Natural killer cell (primary cell): ENCODE measurements at regions of chr2 and their contacts with region 1.

Region 1: DNA sequence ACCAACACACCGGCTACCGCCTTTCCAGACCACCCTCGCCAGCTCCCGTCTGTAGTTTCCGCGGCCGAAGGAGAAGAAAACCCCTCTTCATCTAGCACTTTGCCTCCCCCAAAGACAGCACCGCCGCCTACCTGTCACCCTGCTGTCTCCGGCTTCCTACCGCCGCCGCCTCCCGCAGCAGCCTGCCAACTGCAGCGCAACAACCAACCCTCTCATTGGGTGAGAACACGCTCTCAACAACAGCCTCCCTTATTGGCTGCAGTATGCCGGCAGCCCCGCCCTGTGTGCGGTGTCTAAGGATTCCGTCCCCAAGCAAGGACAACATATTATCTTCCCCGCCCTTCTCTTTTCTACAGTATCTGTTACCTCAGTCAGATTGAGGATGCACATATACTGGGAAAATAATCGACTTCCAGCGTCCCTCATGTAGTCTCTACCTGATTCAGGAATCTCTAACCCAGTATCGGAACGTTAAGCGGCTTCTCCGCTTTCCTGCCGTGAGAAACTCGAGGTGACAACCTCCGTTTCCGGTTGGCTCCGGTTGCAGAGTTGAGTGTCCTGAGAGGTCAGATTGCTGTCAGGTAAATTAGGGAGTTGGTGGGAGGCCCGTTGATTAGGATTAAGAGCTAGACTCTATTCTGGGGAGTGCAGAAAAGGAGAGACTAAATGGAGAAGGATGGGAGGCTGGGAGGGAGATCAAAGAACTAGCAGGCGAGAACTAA is at the starts of genes HYCC2 and NDUFB3:
- DNase-seq: peak; percentile 90 to 98
- ATAC-seq: peak; percentile 92 to 99 (median 96)
- H3K4me3 ChIP-seq: peak within 1 kb of the TSS; percentile 72
- H3K4me3 Mint-ChIP-seq: peak within 1 kb of the TSS; percentile 97
- H3K27ac ChIP-seq: peak within 1 kb of the TSS; percentile 90
- H3K27ac Mint-ChIP-seq: peak within 1 kb of the TSS; percentile 93 to 100
- H3K4me1 ChIP-seq: peaks cover 12% of the 10 kb centered on the region
- H3K4me1 Mint-ChIP-seq: peaks cover 43 to 46% of the 10 kb centered on the region in 2 donors
- H3K27me3 ChIP-seq: no peaks in the 10 kb centered on the region
- H3K27me3 Mint-ChIP-seq: no peaks in the 10 kb centered on the region
- CTCF ChIP-seq: peak; percentile 30
- total RNA-seq, gene HYCC2: 54.2 to 62.5 (median 60.1) TPM
- total RNA-seq, gene NDUFB3: 23.5 to 32.7 (median 30.7) TPM

Region 2: DNA sequence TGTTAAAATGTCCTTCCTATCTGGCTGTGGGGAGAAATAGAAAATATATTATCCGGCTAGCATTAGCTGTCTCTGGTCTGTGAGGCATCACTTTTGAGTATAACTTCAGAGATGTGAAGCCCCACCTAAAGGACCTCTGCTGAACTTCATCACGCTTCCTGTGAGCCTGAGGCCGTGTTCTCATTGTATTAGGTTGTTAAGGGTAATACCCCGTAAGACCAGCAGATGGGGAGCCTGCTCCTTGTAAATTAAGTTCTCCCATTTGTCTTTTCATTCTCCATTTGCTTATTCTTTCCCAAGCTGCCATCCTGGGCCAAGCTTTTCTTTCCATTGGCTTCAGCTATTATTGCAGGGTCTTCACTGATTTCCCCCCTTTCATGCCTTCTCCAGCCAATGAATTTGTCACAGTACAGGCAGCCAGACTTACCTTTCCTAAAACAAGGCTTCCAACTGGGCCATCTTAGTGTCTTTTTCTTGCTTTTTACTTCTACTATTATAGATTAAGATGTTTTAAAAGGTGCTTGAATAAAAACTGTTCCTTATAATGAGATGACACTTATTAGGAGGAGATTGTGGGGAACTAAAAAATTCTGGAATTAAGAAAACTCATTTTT is 170.1 kb before region 1 on chr2:
- intact Hi-C with region 1: loop called (anchors 1 kb)
- DNase-seq: peak; percentile 55 to 91
- ATAC-seq: peak; percentile 100
- H3K4me3 ChIP-seq: no peak overlapping the region
- H3K4me3 Mint-ChIP-seq: no peak overlapping the region
- H3K27ac ChIP-seq: peak overlapping the region; percentile 34
- H3K27ac Mint-ChIP-seq: peak overlapping the region; percentile 63
- H3K4me1 ChIP-seq: no peaks in the 10 kb centered on the region
- H3K4me1 Mint-ChIP-seq: peaks cover 6 to 8% of the 10 kb centered on the region in 2 donors
- H3K27me3 ChIP-seq: no peaks in the 10 kb centered on the region
- H3K27me3 Mint-ChIP-seq: no peaks in the 10 kb centered on the region
- CTCF ChIP-seq: peak; percentile 87

Region 3: DNA sequence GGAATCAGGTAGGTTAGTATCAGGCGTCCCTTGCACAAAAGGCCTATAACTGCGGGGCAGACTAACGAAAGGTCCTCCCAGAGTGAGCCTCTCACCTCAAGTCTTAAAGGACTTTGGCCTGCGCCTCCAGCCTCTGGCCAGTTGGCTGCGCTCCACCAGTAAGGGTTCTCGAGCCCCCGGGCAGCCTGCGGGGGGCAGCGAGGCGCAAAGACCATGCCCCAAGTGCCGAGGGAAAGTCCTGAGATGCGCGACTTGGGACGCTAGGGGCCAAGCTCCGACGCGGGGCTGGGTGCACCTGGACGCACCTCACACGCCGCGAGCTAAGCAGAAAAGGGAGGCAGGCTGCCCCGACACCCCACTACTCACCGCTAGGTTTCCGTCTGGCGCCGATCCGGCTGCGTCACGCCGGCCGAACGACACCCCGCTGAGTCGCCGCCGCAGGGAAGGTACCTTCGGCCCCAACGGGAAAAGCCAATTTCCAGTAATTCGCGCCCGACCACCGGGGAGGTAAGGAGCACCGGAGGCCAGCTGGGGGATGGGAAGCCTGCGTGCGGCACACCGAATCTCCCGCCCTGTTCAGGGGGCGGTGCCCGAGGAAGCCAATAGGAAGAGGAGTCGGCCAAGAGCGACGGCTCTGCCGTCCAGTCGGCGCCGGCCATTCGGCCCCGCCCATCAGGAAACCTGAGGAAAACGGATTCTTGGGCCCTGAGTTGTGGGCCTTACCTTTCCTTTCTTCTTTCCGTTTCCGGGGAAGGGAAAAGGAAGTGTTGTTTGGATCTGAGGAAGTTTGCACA is 108.3 kb before region 1 on chr2 and contains the start of gene ORC2:
- intact Hi-C with region 1: loop called (anchors 2 kb)
- DNase-seq: peak; percentile 94 to 96
- ATAC-seq: peak; percentile 95 to 99 (median 96)
- H3K4me3 ChIP-seq: peak within 1 kb of the TSS; percentile 75
- H3K4me3 Mint-ChIP-seq: peak within 1 kb of the TSS; percentile 98
- H3K27ac ChIP-seq: peak within 1 kb of the TSS; percentile 86
- H3K27ac Mint-ChIP-seq: peak within 1 kb of the TSS; percentile 98
- H3K4me1 ChIP-seq: peaks cover 8% of the 10 kb centered on the region
- H3K4me1 Mint-ChIP-seq: peaks cover 34 to 47% of the 10 kb centered on the region in 2 donors
- H3K27me3 ChIP-seq: no peaks in the 10 kb centered on the region
- H3K27me3 Mint-ChIP-seq: no peaks in the 10 kb centered on the region
- CTCF ChIP-seq: peak; percentile 71
- total RNA-seq, gene ORC2: 21.7 to 48.5 (median 26.1) TPM

Region 4: GRCh38 chr2:201007561-201007998 is 64.1 kb before region 1 on chr2:
- intact Hi-C with region 1: no loop called
- DNase-seq: no peak
- ATAC-seq: no peak
- H3K4me3 ChIP-seq: no peak overlapping the region
- H3K4me3 Mint-ChIP-seq: no peak overlapping the region
- H3K27ac ChIP-seq: no peak overlapping the region
- H3K27ac Mint-ChIP-seq: no peak overlapping the region
- H3K4me1 ChIP-seq: no peaks in the 10 kb centered on the region
- H3K4me1 Mint-ChIP-seq: no peaks in the 10 kb centered on the region
- H3K27me3 ChIP-seq: no peaks in the 10 kb centered on the region
- H3K27me3 Mint-ChIP-seq: no peaks in the 10 kb centered on the region
- CTCF ChIP-seq: no peak

Region 5: DNA sequence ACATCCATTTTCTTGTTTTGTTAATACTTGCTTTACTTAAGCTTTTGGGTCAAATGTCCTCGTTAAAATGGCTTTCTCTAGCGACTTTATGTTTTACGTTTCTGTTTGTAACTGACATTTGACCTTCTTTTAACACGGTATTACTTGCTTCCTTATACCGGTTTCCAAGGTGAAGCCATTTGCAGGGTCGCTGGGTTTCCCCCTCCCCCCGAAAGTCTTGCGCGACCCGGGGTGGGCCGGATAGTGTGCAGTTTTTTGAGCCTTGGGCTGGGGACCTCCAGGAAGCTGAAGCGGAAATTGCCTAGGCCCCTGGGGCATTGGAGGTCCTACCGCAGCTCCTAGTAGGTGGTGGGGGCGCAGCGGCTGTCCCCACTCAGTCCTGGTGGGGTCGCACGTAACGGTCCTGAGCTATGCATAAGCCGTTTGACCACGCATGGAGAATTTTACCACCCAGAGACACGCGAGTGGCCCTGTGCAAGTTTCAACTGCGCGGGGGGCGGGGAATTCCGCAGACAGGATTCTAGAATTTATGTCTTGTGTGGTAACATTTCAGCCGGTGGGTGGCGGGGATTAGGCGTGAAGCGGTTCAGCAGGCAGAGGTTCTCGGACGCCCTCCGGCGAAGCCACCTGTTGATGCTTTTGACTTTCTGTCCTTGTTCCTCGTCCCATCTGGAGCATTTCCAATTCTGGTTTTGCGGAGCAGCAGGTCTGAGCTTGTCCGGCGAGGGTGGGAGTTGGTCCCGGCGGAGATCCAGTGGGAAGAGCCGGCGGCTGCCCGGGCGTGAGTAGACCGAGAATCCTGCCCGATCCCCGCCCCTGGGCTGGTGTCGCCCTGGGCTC is 46.7 kb after region 1 on chr2:
- intact Hi-C with region 1: loop called (anchors 1 kb)
- DNase-seq: peak; percentile 87 to 93
- ATAC-seq: peak; percentile 46 to 61 (median 54)
- H3K4me3 ChIP-seq: peak overlapping the region; percentile 90
- H3K4me3 Mint-ChIP-seq: peak overlapping the region; percentile 95
- H3K27ac ChIP-seq: peak overlapping the region; percentile 93
- H3K27ac Mint-ChIP-seq: peak overlapping the region; percentile 93 to 100
- H3K4me1 ChIP-seq: peaks cover 50% of the 10 kb centered on the region
- H3K4me1 Mint-ChIP-seq: peaks cover 79 to 82% of the 10 kb centered on the region in 2 donors
- H3K27me3 ChIP-seq: no peaks in the 10 kb centered on the region
- H3K27me3 Mint-ChIP-seq: no peaks in the 10 kb centered on the region
- CTCF ChIP-seq: peak; percentile 40

Region 6: DNA sequence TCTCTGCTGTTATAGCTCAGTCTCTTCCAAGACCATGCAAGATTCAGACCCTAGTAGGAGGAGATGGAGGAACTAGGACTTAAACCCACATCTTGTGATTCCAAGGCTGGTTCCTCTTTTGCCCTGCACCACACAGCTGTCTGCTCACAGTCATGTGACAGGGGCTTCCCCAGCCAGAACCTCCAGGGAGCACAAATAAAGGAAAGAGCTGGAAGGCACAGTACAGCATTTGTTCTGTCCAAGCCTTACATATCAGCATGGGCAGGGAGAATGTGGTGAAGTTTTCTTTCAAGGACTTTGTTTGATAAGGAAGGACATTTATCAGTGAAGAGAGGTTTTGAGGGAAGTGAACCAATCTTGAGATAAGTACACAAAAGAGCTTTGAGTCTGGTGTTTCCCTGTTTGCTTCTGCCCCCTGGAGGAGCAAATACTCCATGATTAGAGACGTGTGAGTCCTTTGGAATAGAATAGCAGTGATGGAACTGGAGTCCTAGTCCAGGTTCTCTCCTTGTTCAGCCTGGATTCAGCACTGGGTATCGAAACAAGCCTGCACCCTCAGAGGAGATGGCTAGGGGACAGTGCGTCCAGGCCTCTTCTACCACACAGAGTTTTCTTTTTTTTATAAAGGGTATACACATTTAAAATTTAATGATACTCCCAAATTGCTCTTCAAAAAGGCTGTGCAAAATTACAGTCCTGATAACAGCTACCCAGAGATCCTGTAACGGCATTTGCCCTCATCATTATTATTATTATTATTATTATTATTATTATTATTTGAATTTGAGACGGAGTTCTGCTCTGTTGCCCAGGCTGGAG is 86.7 kb after region 1 on chr2:
- intact Hi-C with region 1: loop called (anchors 1 kb)
- DNase-seq: peak in 1 of 2 donors; percentile 84
- ATAC-seq: peak; percentile 84 to 89 (median 86)
- H3K4me3 ChIP-seq: no peak overlapping the region
- H3K4me3 Mint-ChIP-seq: no peak overlapping the region
- H3K27ac ChIP-seq: peak overlapping the region; percentile 79
- H3K27ac Mint-ChIP-seq: peak overlapping the region; percentile 86 to 88
- H3K4me1 ChIP-seq: peaks cover 27% of the 10 kb centered on the region
- H3K4me1 Mint-ChIP-seq: peaks cover 32 to 37% of the 10 kb centered on the region in 2 donors
- H3K27me3 ChIP-seq: no peaks in the 10 kb centered on the region
- H3K27me3 Mint-ChIP-seq: no peaks in the 10 kb centered on the region
- CTCF ChIP-seq: peak; percentile 37

Region 7: DNA sequence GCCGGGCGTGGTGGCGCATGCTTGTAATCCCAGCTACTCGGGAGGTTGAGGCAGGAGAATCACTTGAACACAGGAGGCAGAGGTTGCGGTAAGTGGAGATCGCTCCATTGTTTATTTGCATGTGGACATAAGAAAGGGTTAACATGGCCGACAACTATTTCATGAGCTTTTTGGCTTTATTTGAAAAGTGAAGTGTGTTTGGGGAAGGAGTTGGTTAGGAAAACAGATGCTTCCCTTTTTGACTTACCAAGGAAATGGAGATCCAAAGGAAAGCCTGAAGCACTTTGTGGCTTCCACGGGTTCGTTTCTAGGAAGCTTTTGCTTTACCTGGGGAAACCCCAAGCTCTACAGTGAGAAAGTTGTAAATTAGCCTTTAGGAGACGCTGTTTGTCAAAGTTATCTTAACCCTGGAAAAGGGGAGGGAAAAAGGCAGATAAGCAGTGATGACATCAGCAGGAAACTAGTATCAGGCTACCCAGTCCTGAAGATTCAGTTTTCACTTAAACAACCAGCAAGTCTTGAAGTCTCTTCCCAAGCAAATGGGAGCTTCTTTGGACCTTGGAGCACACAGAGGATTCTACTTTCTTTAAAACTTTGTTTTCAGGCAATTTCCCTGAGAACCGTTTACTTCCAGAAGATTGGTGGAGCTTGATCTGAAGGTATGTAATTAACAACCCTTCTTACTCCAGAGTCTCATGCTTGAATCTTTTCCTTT is 111.2 kb after region 1 on chr2 and contains the start of gene CASP10:
- intact Hi-C with region 1: loop called (anchors 5 kb)
- DNase-seq: peak in 1 of 2 donors; percentile 87
- ATAC-seq: peak; percentile 75 to 83 (median 79)
- H3K4me3 ChIP-seq: peak within 1 kb of the TSS; percentile 59
- H3K4me3 Mint-ChIP-seq: peak within 1 kb of the TSS; percentile 97
- H3K27ac ChIP-seq: peak within 1 kb of the TSS; percentile 72
- H3K27ac Mint-ChIP-seq: peak within 1 kb of the TSS; percentile 97 to 98
- H3K4me1 ChIP-seq: peaks cover 28% of the 10 kb centered on the region
- H3K4me1 Mint-ChIP-seq: peaks cover 51 to 52% of the 10 kb centered on the region in 2 donors
- H3K27me3 ChIP-seq: no peaks in the 10 kb centered on the region
- H3K27me3 Mint-ChIP-seq: no peaks in the 10 kb centered on the region
- CTCF ChIP-seq: peak; percentile 57
- total RNA-seq, gene CASP10: 67.4 to 101 (median 75.3) TPM

Region 8: GRCh38 chr2:201696151-201696659 is 624.6 kb after region 1 on chr2:
- intact Hi-C with region 1: no loop called
- DNase-seq: no peak
- ATAC-seq: no peak
- H3K4me3 ChIP-seq: no peak overlapping the region
- H3K4me3 Mint-ChIP-seq: no peak overlapping the region
- H3K27ac ChIP-seq: no peak overlapping the region
- H3K27ac Mint-ChIP-seq: no peak overlapping the region
- H3K4me1 ChIP-seq: no peaks in the 10 kb centered on the region
- H3K4me1 Mint-ChIP-seq: no peaks in the 10 kb centered on the region
- H3K27me3 ChIP-seq: no peaks in the 10 kb centered on the region
- H3K27me3 Mint-ChIP-seq: peaks cover 0 to 3% of the 10 kb centered on the region in 2 donors
- CTCF ChIP-seq: no peak

Region 9: GRCh38 chr2:201807452-201807999 is 735.9 kb after region 1 on chr2:
- intact Hi-C with region 1: no loop called
- DNase-seq: no peak
- ATAC-seq: no peak
- H3K4me3 ChIP-seq: no peak overlapping the region
- H3K4me3 Mint-ChIP-seq: no peak overlapping the region
- H3K27ac ChIP-seq: no peak overlapping the region
- H3K27ac Mint-ChIP-seq: no peak overlapping the region
- H3K4me1 ChIP-seq: no peaks in the 10 kb centered on the region
- H3K4me1 Mint-ChIP-seq: no peaks in the 10 kb centered on the region
- H3K27me3 ChIP-seq: peaks cover under 1% of the 10 kb centered on the region
- H3K27me3 Mint-ChIP-seq: peaks cover 9 to 32% of the 10 kb centered on the region in 2 donors
- CTCF ChIP-seq: no peak